Activated T-helper 2 cell treated with anti-CD3 and anti-CD28 coated beads, Interferon-gamma antibody, Interleukin-2, Interleukin-4, amounts not matched to agents 10 μg/mL and 5 μg/mL and 100 μg/mL, durations not matched to agents 14 hours and 24 hours and 36 hours (primary cell): ENCODE measurements at regions of chr19 and their contacts with region 1.

Region 1: GRCh38 chr19:58400916-58401839 is 5.7 kb downstream of the RNF225 start:
- DNase-seq: peak; percentile 99
- H3K4me3 Mint-ChIP-seq: peak overlapping the region; percentile 80
- H3K27ac Mint-ChIP-seq: peak overlapping the region; percentile 58
- H3K4me1 Mint-ChIP-seq: peaks cover 12% of the 10 kb centered on the region
- H3K27me3 Mint-ChIP-seq: peaks cover 5% of the 10 kb centered on the region

Region 2: GRCh38 chr19:58362272-58362994 is 38.7 kb before region 1 on chr19 and contains the start of gene ZNF497:
- intact Hi-C with region 1: loop called (anchors 1 kb)
- DNase-seq: peak; percentile 95
- H3K4me3 Mint-ChIP-seq: peak within 1 kb of the TSS; percentile 91
- H3K27ac Mint-ChIP-seq: peak within 1 kb of the TSS; percentile 88
- H3K4me1 Mint-ChIP-seq: peaks cover 6% of the 10 kb centered on the region
- H3K27me3 Mint-ChIP-seq: no peaks in the 10 kb centered on the region
- total RNA-seq, gene ZNF497: 0.76 and 2.2 TPM in 2 replicates

Region 3: DNA sequence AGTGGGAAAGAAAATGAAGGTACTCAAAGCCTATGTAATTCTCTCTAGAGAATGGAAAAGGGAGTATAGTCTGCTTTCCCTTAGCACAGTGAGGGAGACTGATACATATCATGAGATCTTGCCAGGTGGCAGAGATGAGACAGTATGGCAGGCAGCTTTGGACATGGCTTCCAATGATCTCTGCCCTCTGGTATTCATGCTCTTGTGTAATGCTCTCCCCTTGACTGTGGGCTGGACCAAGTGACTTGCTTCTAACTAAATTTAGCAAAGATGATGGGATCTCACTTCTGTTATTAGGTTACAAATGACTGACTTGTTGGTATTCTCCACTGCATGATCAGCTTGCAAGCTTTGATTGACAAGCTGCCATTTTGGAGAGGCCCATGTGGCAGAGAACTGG is 28.6 kb after region 1 on chr19:
- intact Hi-C with region 1: no loop called
- DNase-seq: no peak
- H3K4me3 Mint-ChIP-seq: no peak overlapping the region
- H3K27ac Mint-ChIP-seq: no peak overlapping the region
- H3K4me1 Mint-ChIP-seq: no peaks in the 10 kb centered on the region
- H3K27me3 Mint-ChIP-seq: no peaks in the 10 kb centered on the region

Region 4: DNA sequence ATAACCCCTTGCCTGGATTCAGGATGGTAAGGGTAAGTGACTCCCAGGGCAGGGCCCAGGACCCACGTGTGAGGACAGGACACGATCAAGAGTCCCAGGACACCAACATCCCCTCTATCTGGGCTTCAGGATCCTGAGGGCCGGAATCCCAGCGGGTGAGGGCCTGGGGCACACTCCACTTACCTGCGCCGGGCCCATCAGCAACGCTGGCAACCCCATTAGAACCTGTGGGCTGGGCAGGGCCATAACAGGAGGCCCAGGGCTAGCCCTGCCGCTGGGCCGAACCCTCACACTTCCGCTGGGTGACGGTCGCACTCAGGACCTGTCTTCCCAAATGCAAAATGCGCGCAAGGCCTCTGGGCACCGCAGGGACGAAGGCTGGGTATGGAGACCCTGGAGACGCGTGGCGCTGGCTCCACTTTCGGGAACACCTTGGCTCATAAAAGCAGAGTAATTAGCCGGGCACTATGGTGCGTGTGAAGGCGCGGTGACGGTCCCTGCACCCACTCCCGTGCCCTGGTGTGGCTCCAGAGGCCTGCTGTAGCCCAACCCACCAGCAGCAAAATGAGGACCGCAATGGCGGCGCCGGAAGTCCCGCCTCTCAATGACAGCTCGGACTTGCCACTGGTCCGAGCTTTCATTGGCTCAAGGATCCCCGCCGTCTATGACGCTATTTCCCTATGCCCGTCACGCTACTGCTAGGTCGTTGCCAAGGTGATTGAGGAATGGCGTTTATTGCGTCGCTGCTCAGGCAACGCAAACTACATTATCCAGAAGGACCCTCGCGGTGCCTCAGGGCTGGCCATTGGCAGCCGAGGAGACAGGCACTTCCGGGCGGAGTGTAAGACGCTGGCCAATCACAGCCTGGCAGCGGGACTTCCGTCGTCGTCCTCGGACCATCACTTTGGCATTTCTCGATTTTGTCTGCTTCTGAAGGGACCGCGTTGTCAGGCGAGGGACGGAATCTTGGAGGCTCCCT is 38.7 kb after region 1 on chr19 and contains the start of gene ZNF132:
- intact Hi-C with region 1: loop called (anchors 1 kb)
- DNase-seq: peak; percentile 94
- H3K4me3 Mint-ChIP-seq: peak within 1 kb of the TSS; percentile 85
- H3K27ac Mint-ChIP-seq: peak within 1 kb of the TSS; percentile 80
- H3K4me1 Mint-ChIP-seq: peaks cover 18% of the 10 kb centered on the region
- H3K27me3 Mint-ChIP-seq: no peaks in the 10 kb centered on the region
- total RNA-seq, gene ZNF132: 3.2 and 3.4 TPM in 2 replicates

Region 5: GRCh38 chr19:58460039-58460438 is 58.9 kb after region 1 on chr19:
- intact Hi-C with region 1: no loop called
- DNase-seq: no peak
- H3K4me3 Mint-ChIP-seq: no peak overlapping the region
- H3K27ac Mint-ChIP-seq: no peak overlapping the region
- H3K4me1 Mint-ChIP-seq: no peaks in the 10 kb centered on the region
- H3K27me3 Mint-ChIP-seq: no peaks in the 10 kb centered on the region

Region 6: GRCh38 chr19:58513694-58514563 is 112.8 kb after region 1 on chr19:
- intact Hi-C with region 1: loop called (anchors 1 kb)
- DNase-seq: peak; percentile 95
- H3K4me3 Mint-ChIP-seq: peak overlapping the region; percentile 88
- H3K27ac Mint-ChIP-seq: peak overlapping the region; percentile 91
- H3K4me1 Mint-ChIP-seq: peaks cover 26% of the 10 kb centered on the region
- H3K27me3 Mint-ChIP-seq: no peaks in the 10 kb centered on the region